Esophagus muscularis mucosa (tissue), 4 donors: ENCODE measurements at regions of chr3 and their contacts with region 1.

Region 1: DNA sequence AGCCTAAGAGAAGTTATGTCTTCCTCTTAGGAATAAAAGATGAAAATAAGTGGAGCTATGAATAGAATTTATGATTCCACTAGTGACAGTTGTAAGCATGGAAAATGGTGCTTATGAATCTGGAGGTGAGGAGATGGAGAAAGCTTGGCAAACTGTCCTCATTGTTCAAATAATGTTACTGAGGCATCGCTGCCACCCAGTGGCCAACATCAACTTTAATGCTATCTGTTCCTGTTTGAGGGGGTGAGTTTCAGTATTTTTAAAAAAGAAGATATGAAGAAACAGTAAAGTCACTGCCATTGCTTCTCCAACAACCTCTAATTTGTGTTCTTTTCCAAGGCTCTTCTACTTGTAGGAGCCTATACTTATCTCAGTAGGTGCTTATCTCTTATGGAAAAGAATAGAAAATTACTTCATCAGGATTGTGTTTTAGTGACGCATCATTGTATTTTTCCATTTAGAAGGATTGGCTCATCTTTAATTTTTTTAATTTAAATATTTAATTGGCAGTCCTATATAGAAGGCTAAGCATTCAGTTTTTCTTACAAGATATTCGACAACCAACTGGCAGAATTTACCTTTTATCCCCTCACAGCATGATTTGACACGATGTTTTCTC is 260.4 kb upstream of the P2RY1 start:
- DNase-seq: no peak
- H3K4me3 ChIP-seq: no peak overlapping the region
- H3K27ac ChIP-seq: no peak overlapping the region
- H3K4me1 ChIP-seq: peaks cover 0 to 3% (median 0%) of the 10 kb centered on the region in 4 donors
- H3K27me3 ChIP-seq: no peaks in the 10 kb centered on the region
- CTCF ChIP-seq: peak; percentile 37 to 55 (median 47)
- EP300 ChIP-seq: no peak
- POLR2A ChIP-seq: no peak

Region 2: GRCh38 chr3:152365766-152366593 is 208.6 kb before region 1 on chr3:
- intact Hi-C with region 1: no loop called
- DNase-seq: no peak
- H3K4me3 ChIP-seq: no peak overlapping the region
- H3K27ac ChIP-seq: peak overlapping the region; percentile 4 to 50 (median 46)
- H3K4me1 ChIP-seq: peaks cover 53 to 86% (median 77%) of the 10 kb centered on the region in 4 donors
- H3K27me3 ChIP-seq: no peaks in the 10 kb centered on the region
- CTCF ChIP-seq: no peak
- EP300 ChIP-seq: no peak
- POLR2A ChIP-seq: no peak

Region 3: GRCh38 chr3:152471814-152472671 is 102.5 kb before region 1 on chr3:
- intact Hi-C with region 1: loop called (anchors 10 kb)
- DNase-seq: no peak
- H3K4me3 ChIP-seq: peak overlapping the region; percentile 20 to 33 (median 28)
- H3K27ac ChIP-seq: peak overlapping the region in 2 of 4 donors; percentile 17 to 24
- H3K4me1 ChIP-seq: peaks cover 0 to 10% (median 3%) of the 10 kb centered on the region in 4 donors
- H3K27me3 ChIP-seq: no peaks in the 10 kb centered on the region
- CTCF ChIP-seq: peak; percentile 56 to 78 (median 75)
- EP300 ChIP-seq: no peak
- POLR2A ChIP-seq: no peak

Region 4: GRCh38 chr3:152656214-152656971 is 81.8 kb after region 1 on chr3:
- intact Hi-C with region 1: no loop called
- DNase-seq: no peak
- H3K4me3 ChIP-seq: peak overlapping the region in 1 of 4 donors; percentile 16
- H3K27ac ChIP-seq: peak overlapping the region in 1 of 4 donors; percentile 4
- H3K4me1 ChIP-seq: peaks cover 0 to 5% (median 0%) of the 10 kb centered on the region in 4 donors
- H3K27me3 ChIP-seq: no peaks in the 10 kb centered on the region
- CTCF ChIP-seq: no peak
- EP300 ChIP-seq: no peak
- POLR2A ChIP-seq: no peak